Activated T-helper 2 cell treated with anti-CD3 and anti-CD28 coated beads, Interferon-gamma antibody, Interleukin-2, Interleukin-4, amounts not matched to agents 10 μg/mL and 5 μg/mL and 100 μg/mL, durations not matched to agents 14 hours and 24 hours and 36 hours (primary cell): ENCODE measurements at regions of chr19 and their contacts with region 1.

Region 1: DNA sequence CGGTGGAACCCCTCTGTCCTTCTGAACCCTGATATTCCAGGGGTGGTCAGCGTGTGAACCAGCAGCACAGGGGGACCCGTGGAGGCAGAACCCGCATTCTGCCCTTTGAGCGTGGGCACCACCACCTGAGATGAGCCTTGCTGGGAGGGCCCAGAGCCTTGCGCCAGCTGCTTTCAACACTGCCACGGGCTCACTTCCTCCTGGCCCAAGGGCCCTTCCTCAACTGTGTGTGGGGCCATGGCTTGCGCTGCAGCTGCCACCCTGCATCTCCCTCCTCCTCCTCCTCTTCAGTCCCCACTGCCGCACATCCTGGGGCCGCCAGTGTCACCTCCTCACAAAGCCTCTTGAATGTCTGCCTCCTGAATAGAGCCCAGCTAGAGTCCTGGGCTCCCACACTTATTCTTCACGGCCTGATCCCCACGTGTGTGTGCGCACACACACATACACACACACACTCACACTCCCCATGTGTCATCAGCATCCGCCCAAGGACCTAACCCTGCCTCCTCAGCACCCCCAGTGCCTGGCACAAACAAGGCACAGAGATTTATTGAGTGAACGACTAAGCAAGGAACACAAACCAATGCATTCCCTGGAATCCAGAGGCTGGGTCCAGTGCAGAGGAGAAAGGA is 26.9 kb upstream of the TMEM160 start:
- DNase-seq: no peak
- H3K4me3 Mint-ChIP-seq: no peak overlapping the region
- H3K27ac Mint-ChIP-seq: no peak overlapping the region
- H3K4me1 Mint-ChIP-seq: no peaks in the 10 kb centered on the region
- H3K27me3 Mint-ChIP-seq: no peaks in the 10 kb centered on the region

Region 2: GRCh38 chr19:47124937-47125668 is 49.8 kb after region 1 on chr19:
- intact Hi-C with region 1: loop called (anchors 1 kb)
- DNase-seq: no peak
- H3K4me3 Mint-ChIP-seq: no peak overlapping the region
- H3K27ac Mint-ChIP-seq: no peak overlapping the region
- H3K4me1 Mint-ChIP-seq: peaks cover 5% of the 10 kb centered on the region
- H3K27me3 Mint-ChIP-seq: no peaks in the 10 kb centered on the region